ENCODE measurements at regions of chr19 and their contacts with region 1.

Region 1: DNA sequence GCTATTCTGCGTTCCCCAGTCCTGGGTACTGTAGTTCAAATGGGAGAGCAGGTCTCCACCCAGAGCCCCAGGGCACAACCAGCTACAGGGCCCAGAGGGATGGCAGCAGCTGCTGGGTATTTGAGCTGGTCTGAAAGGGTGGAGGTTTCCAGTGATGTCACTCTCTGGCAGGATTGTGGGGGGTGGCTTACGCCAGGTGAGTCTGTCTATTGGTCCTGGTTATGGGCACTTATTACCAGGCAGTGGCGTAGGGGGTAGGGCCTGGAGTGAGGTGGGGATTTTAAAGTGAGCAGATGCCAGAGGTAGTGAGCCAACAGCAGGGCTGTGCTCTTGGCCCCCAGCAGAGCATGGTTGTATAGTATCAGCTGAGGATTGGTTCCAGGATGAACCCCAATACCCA is 6.2 kb downstream of the RPS19 start:
- DNase-seq: no peak
- H3K4me3 ChIP-seq: no peak overlapping the region
- H3K27ac ChIP-seq: peak overlapping the region; percentile 29; the same call in 1 of the 2 replicates
- H3K4me1 ChIP-seq: peaks cover 3 to 22% (median 11%) of the 10 kb centered on the region in 4 experiments
- H3K27me3 ChIP-seq: no peaks in the 10 kb centered on the region
- CTCF ChIP-seq: no peak
- EP300 ChIP-seq: no peak
- POLR2A ChIP-seq: peak in 1 of 2 experiments; percentile 64
- RAD21 ChIP-seq: no peak

Region 2: DNA sequence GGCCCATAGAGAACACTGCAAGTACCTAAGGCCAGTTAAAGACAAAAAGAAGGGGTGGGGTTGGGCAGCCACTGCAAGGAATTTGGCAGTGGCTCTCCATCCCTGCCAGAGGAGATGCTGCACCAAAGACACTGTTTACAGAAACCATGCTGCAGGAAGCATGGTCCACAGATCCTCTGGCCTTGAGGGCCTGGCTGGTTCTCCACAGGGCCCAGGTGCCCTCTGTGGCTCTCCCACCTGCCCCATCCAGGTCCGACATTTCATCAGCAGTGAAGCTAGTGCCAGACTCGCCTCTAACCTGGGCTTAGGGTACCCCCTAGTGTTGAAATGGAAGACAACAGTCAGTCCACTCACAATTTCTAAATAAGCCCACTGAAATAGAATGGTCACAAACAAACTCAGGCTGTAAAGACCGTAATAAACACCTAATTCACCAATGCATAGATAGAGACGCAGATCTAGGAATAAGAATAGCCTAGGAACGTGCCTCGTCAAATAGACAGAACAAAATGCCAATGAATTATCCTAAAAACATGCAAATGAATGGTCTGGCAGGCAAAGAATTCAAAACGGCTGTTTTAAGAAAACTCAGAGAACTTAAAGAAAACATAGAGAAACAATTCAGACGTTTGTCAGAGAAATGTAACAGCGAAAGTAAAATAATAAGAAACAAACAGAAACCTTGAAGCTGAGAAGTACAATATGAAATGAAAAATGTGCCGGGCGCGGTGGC is 45.1 kb before region 1 on chr19:
- CTCF ChIA-PET with region 1: no interaction called
- POLR2A ChIA-PET with region 1: no interaction called
- DNase-seq: peak; percentile 27 to 50
- H3K4me3 ChIP-seq: no peak overlapping the region
- H3K27ac ChIP-seq: no peak overlapping the region
- H3K4me1 ChIP-seq: no peaks in the 10 kb centered on the region
- H3K27me3 ChIP-seq: no peaks in the 10 kb centered on the region
- CTCF ChIP-seq: peak in 2 of 3 experiments; percentile 57 to 73; a peak in 3 of 4 replicates
- EP300 ChIP-seq: no peak
- POLR2A ChIP-seq: no peak
- RAD21 ChIP-seq: peak; percentile 75 to 81

Region 3: DNA sequence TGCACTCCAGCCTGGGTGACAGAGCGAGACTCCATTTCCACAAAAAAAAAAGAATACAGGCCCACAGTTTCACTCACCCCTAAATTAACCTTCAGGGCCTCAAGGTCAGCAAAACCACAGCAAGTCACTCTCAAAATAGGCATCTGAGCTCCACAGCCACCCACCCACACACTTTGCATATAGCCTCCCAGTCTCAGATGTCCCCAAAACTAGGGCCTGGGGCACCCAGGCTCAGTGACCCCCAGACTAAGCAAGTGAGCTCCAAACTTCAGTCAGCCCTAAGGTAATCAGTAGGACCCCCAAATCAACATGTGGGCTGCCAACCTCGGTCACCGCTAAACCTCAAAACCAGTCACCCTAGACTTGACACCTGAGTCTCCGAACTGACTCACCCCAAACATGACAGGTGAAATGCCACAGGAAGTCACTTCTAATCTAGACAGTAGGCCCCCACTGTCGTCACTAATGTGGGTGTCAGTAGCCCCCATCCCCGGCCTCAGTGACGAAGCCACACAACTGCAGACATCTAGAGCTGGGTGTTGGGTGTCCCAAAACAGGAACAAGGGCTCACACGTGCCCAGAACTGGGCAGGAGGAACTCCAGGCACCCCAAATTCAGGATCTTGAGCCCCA is 79.0 kb after region 1 on chr19:
- CTCF ChIA-PET with region 1: interaction called, 30 read pairs
- POLR2A ChIA-PET with region 1: interaction called, 26 read pairs
- DNase-seq: no peak
- H3K4me3 ChIP-seq: no peak overlapping the region
- H3K27ac ChIP-seq: no peak overlapping the region
- H3K4me1 ChIP-seq: no peaks in the 10 kb centered on the region; a peak in 1 of 7 replicates
- H3K27me3 ChIP-seq: peaks cover 9 to 16% (median 15%) of the 10 kb centered on the region in 4 experiments; a peak in 6 of 7 replicates
- CTCF ChIP-seq: no peak
- EP300 ChIP-seq: no peak
- POLR2A ChIP-seq: no peak
- RAD21 ChIP-seq: no peak

Region 4: GRCh38 chr19:42191855-42192254 is 325.6 kb after region 1 on chr19:
- CTCF ChIA-PET with region 1: no interaction called
- POLR2A ChIA-PET with region 1: no interaction called
- DNase-seq: no peak
- H3K4me3 ChIP-seq: no peak overlapping the region
- H3K27ac ChIP-seq: no peak overlapping the region
- H3K4me1 ChIP-seq: peaks cover 0 to 6% (median 4%) of the 10 kb centered on the region in 4 experiments; a peak in 5 of 7 replicates
- H3K27me3 ChIP-seq: peaks cover 0 to 3% (median 0%) of the 10 kb centered on the region in 4 experiments; a peak in 2 of 7 replicates
- CTCF ChIP-seq: no peak
- EP300 ChIP-seq: no peak
- POLR2A ChIP-seq: no peak
- RAD21 ChIP-seq: no peak